Gastrocnemius medialis (tissue), 4 donors: ENCODE measurements at regions of chr12 and their contacts with region 1.

Region 1: GRCh38 chr12:39892146-39892545 is 213.7 kb downstream of the SLC2A13 start:
- DNase-seq: peak in 1 of 2 donors; percentile 16
- ATAC-seq: no peak
- H3K4me3 ChIP-seq: no peak overlapping the region
- H3K27ac ChIP-seq: no peak overlapping the region
- H3K4me1 ChIP-seq: no peaks in the 10 kb centered on the region
- H3K27me3 ChIP-seq: no peaks in the 10 kb centered on the region
- CTCF ChIP-seq: no peak
- POLR2A ChIP-seq: no peak

Region 2: GRCh38 chr12:39372929-39373328 is 519.2 kb before region 1 on chr12:
- in situ Hi-C with region 1: no loop called
- intact Hi-C with region 1: loop called (anchors 10 kb)
- DNase-seq: no peak
- ATAC-seq: no peak
- H3K4me3 ChIP-seq: no peak overlapping the region
- H3K27ac ChIP-seq: no peak overlapping the region
- H3K4me1 ChIP-seq: no peaks in the 10 kb centered on the region
- H3K27me3 ChIP-seq: no peaks in the 10 kb centered on the region
- CTCF ChIP-seq: no peak
- POLR2A ChIP-seq: no peak

Region 3: GRCh38 chr12:40011775-40012129 is 119.6 kb after region 1 on chr12:
- in situ Hi-C with region 1: no loop called
- intact Hi-C with region 1: no loop called
- DNase-seq: no peak
- ATAC-seq: peak in 1 of 2 donors; percentile 26
- H3K4me3 ChIP-seq: peak overlapping the region in 3 of 4 donors; percentile 33 to 39 (median 34)
- H3K27ac ChIP-seq: peak overlapping the region in 1 of 4 donors; percentile 13
- H3K4me1 ChIP-seq: peaks cover 5% of the 10 kb centered on the region in 2 donors
- H3K27me3 ChIP-seq: no peaks in the 10 kb centered on the region
- CTCF ChIP-seq: no peak
- POLR2A ChIP-seq: no peak